Gastrocnemius medialis (tissue), 4 donors: ENCODE measurements at regions of chr1 and their contacts with region 1.

Region 1: GRCh38 chr1:223531742-223532341 is 133.7 kb downstream of the CAPN8 start:
- DNase-seq: peak in 1 of 2 donors; percentile 42
- ATAC-seq: peak; percentile 43 to 86
- H3K4me3 ChIP-seq: no peak overlapping the region
- H3K27ac ChIP-seq: no peak overlapping the region
- H3K4me1 ChIP-seq: peaks cover 0 to 13% of the 10 kb centered on the region in 2 donors
- H3K27me3 ChIP-seq: no peaks in the 10 kb centered on the region
- CTCF ChIP-seq: peak; percentile 28 to 61 (median 53)
- POLR2A ChIP-seq: no peak

Region 2: DNA sequence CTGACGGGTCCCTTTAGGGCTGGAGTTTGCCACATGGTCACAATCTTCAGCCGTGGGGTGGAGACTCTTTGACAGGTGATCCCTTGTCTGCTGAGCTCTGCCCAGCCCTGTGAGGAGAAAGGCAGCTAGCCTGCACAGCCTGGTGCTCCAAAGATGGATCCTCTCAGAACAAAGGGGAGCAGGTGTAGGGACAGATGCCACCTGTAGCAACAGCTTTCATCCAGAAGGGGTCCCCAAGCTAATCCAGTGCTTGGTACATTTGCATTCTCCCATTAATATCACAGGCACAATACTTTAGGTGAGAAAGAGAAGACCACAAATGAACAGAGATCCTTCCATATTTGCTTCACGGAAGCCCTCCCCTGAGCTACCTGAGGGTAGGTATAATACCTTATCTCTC is 45.5 kb before region 1 on chr1:
- in situ Hi-C with region 1: no loop called
- intact Hi-C with region 1: no loop called
- DNase-seq: no peak
- ATAC-seq: no peak
- H3K4me3 ChIP-seq: no peak overlapping the region
- H3K27ac ChIP-seq: no peak overlapping the region
- H3K4me1 ChIP-seq: no peaks in the 10 kb centered on the region
- H3K27me3 ChIP-seq: peaks cover 0 to 12% (median 0%) of the 10 kb centered on the region in 3 donors
- CTCF ChIP-seq: no peak
- POLR2A ChIP-seq: no peak

Region 3: GRCh38 chr1:223549740-223550139 is 17.9 kb after region 1 on chr1:
- in situ Hi-C with region 1: no loop called
- intact Hi-C with region 1: no loop called
- DNase-seq: no peak
- ATAC-seq: no peak
- H3K4me3 ChIP-seq: no peak overlapping the region
- H3K27ac ChIP-seq: no peak overlapping the region
- H3K4me1 ChIP-seq: no peaks in the 10 kb centered on the region
- H3K27me3 ChIP-seq: no peaks in the 10 kb centered on the region
- CTCF ChIP-seq: no peak
- POLR2A ChIP-seq: no peak

Region 4: DNA sequence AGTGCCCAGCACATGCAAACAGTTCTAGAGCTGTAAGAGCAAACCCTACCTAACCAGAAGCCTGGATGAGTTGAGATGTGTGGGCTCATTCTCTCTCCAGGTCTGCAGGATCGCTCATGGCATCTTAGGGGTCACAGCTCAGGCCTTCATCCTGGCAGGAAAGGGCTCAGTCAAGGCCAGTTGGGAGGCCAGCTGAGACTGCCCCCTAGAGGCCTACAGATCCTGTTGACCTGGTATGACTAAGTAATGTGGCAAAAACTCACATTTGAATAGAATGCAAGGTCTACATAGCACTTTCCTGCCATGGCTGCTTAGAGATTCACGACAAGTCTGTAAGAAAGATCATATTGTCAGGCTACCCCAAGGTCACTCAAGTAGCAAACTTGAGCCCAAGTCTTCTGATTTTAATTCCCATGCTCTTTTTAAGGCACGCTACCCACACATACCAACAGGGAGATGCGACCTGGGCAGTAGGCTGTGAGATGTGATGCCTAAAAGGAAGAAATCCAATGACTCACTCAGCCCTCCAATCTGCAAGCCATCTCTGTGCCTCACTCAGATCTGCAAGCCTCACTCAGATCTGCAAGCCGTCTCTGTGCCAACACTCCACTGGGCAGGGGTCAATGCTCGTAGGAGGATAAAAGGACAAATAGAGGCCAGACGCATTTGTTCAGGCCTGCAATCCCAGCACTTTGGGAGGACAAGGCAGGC is 138.8 kb after region 1 on chr1:
- in situ Hi-C with region 1: no loop called
- intact Hi-C with region 1: loop called (anchors 1 kb)
- DNase-seq: peak; percentile 9 to 25
- ATAC-seq: peak; percentile 60 to 74
- H3K4me3 ChIP-seq: no peak overlapping the region
- H3K27ac ChIP-seq: no peak overlapping the region
- H3K4me1 ChIP-seq: peaks cover 0 to 5% of the 10 kb centered on the region in 2 donors
- H3K27me3 ChIP-seq: no peaks in the 10 kb centered on the region
- CTCF ChIP-seq: peak in 3 of 5 experiments; percentile 41 to 47 (median 45)
- POLR2A ChIP-seq: no peak

Region 5: GRCh38 chr1:223683586-223684487 is 152.0 kb after region 1 on chr1:
- in situ Hi-C with region 1: no loop called
- intact Hi-C with region 1: loop called (anchors 1 kb)
- DNase-seq: peak; percentile 8 to 31
- ATAC-seq: peak in 1 of 2 donors; percentile 76
- H3K4me3 ChIP-seq: no peak overlapping the region
- H3K27ac ChIP-seq: no peak overlapping the region
- H3K4me1 ChIP-seq: no peaks in the 10 kb centered on the region
- H3K27me3 ChIP-seq: no peaks in the 10 kb centered on the region
- CTCF ChIP-seq: peak; percentile 49 to 68 (median 63)
- POLR2A ChIP-seq: no peak